IMR-90 (cell line): ENCODE measurements at regions of chrX and their contacts with region 1.

Region 1: GRCh38 chrX:97482666-97483300 is 599.1 kb downstream of the RPA4 start:
- DNase-seq: no peak
- ATAC-seq: no peak
- H3K4me3 ChIP-seq: no peak overlapping the region
- H3K27ac ChIP-seq: no peak overlapping the region
- H3K4me1 ChIP-seq: no peaks in the 10 kb centered on the region
- H3K27me3 ChIP-seq: no peaks in the 10 kb centered on the region
- CTCF ChIP-seq: no peak
- POLR2A ChIP-seq: no peak
- RAD21 ChIP-seq: no peak

Region 2: GRCh38 chrX:95728446-95728845 is 1754.3 kb before region 1 on chrX:
- CTCF ChIA-PET with region 1: no interaction called
- POLR2A ChIA-PET with region 1: no interaction called
- dilution Hi-C with region 1: no loop called
- in situ Hi-C with region 1: no loop called
- intact Hi-C with region 1: no loop called
- DNase-seq: no peak
- ATAC-seq: no peak
- H3K4me3 ChIP-seq: no peak overlapping the region
- H3K27ac ChIP-seq: no peak overlapping the region
- H3K4me1 ChIP-seq: no peaks in the 10 kb centered on the region
- H3K27me3 ChIP-seq: peaks cover 2% of the 10 kb centered on the region
- CTCF ChIP-seq: no peak
- POLR2A ChIP-seq: no peak
- RAD21 ChIP-seq: no peak

Region 3: GRCh38 chrX:96884027-96884426 is 598.8 kb before region 1 on chrX:
- CTCF ChIA-PET with region 1: no interaction called
- POLR2A ChIA-PET with region 1: no interaction called
- dilution Hi-C with region 1: no loop called
- in situ Hi-C with region 1: no loop called
- intact Hi-C with region 1: no loop called
- DNase-seq: no peak
- ATAC-seq: no peak
- H3K4me3 ChIP-seq: no peak overlapping the region
- H3K27ac ChIP-seq: no peak overlapping the region
- H3K4me1 ChIP-seq: no peaks in the 10 kb centered on the region
- H3K27me3 ChIP-seq: no peaks in the 10 kb centered on the region
- CTCF ChIP-seq: no peak
- POLR2A ChIP-seq: no peak
- RAD21 ChIP-seq: no peak

Region 4: DNA sequence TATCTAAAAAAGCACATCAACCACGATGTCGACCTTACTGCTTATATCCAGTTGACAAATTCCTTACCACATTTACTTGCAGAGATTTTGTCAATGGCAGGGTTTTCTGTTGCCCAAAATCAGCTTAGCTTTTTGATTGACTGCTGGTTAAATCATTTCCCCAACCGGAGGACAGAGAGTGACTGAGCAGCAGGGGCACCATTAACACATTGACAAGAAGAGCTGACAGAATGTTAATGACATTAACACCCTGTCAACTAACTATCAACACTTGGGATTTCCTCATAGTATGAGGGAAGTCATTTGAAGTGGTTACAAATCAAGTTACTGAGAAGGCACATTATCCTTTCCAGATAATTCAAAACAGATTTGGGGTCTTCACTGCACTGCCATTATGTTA is 230.7 kb before region 1 on chrX:
- CTCF ChIA-PET with region 1: no interaction called
- POLR2A ChIA-PET with region 1: no interaction called
- dilution Hi-C with region 1: no loop called
- in situ Hi-C with region 1: no loop called
- intact Hi-C with region 1: no loop called
- DNase-seq: no peak
- ATAC-seq: no peak
- H3K4me3 ChIP-seq: no peak overlapping the region
- H3K27ac ChIP-seq: no peak overlapping the region
- H3K4me1 ChIP-seq: no peaks in the 10 kb centered on the region
- H3K27me3 ChIP-seq: no peaks in the 10 kb centered on the region; the same call in 1 of the 2 replicates
- CTCF ChIP-seq: no peak
- POLR2A ChIP-seq: no peak
- RAD21 ChIP-seq: no peak

Region 5: GRCh38 chrX:97504435-97504834 is 21.7 kb after region 1 on chrX:
- CTCF ChIA-PET with region 1: no interaction called
- POLR2A ChIA-PET with region 1: interaction called, 20 read pairs
- dilution Hi-C with region 1: no loop called
- in situ Hi-C with region 1: no loop called
- intact Hi-C with region 1: no loop called
- DNase-seq: no peak
- ATAC-seq: no peak
- H3K4me3 ChIP-seq: no peak overlapping the region
- H3K27ac ChIP-seq: no peak overlapping the region
- H3K4me1 ChIP-seq: no peaks in the 10 kb centered on the region
- H3K27me3 ChIP-seq: no peaks in the 10 kb centered on the region
- CTCF ChIP-seq: no peak
- POLR2A ChIP-seq: no peak
- RAD21 ChIP-seq: no peak

Region 6: GRCh38 chrX:97714072-97714471 is 231.3 kb after region 1 on chrX:
- CTCF ChIA-PET with region 1: no interaction called
- POLR2A ChIA-PET with region 1: no interaction called
- dilution Hi-C with region 1: no loop called
- in situ Hi-C with region 1: no loop called
- intact Hi-C with region 1: no loop called
- DNase-seq: no peak
- ATAC-seq: no peak
- H3K4me3 ChIP-seq: no peak overlapping the region
- H3K27ac ChIP-seq: no peak overlapping the region
- H3K4me1 ChIP-seq: no peaks in the 10 kb centered on the region
- H3K27me3 ChIP-seq: no peaks in the 10 kb centered on the region
- CTCF ChIP-seq: no peak
- POLR2A ChIP-seq: no peak
- RAD21 ChIP-seq: no peak